GM13977 (cell line): ENCODE measurements at regions of chr12 and their contacts with region 1.

Region 1: DNA sequence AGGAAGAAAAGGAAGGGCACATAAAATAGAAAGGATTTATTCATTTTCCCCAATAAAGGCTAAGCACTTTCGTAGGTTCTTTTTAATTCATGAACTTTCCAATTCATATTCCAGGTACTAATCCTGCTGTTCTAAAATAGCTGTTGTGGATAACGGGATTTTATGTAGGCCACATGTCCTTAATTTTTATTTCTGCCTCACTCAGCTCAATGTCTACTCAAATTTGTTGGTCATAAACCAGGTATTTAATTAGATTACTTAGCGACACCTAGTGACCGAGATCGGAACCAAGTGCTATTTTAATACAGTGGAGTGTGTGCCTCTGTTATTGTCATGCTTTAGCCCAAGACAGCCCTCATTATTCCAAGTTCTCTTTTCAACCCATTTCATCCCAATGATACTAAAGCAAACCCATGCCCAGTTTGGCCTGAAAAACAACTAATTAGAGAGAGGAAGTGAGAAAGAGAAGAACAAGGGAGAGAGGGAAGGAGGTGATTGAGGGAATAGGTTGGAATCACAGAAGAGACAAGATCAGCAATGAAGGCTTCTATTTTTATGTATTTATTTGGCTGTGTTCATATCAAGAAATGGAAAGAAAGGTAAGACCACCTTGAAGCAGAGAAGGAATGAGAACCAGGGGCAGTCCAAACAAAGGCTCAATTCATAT is 45.9 kb upstream of the IFNG-AS1 start:
- DNase-seq: peak; percentile 40
- CTCF ChIP-seq: peak; percentile 73

Region 2: DNA sequence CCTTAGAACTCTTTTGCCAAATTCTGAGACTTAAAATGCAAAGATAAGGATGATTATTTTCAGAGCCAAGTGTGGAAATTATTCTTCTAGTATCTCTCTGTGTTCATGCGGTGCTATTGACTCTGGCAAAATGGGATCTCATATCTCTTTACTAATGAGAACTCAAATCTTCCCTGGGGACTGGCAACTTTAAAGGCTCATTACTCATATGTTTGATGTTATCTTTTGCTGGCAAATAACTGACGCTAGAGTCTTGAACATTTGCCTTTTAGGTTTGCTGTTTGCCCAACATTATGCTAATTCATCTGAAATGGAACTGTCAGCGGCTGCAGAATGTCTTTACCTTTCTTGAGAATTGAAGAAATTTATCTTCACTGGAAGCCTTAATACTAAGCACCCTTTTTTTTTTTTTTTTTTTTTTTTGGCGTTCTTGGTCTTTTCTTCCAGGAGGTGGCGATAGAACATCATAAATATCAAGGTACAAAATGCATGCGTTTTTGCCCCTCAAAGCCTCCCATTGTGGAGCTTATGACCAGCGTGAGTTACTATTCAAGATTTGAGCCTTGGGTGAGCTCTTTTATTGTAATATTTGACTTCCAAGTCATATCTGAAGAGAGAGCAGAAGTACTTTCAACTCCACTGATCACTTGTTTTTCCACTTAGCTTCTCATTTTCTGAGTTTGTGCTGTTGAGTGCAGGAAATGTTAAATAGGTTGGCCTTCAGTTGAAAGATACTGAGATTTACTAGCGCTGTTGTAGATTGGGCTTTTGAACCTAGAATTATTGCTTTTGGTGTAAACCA is 587.6 kb before region 1 on chr12:
- in situ Hi-C with region 1: loop called (anchors 10 kb)
- DNase-seq: peak; percentile 18
- CTCF ChIP-seq: peak; percentile 50

Region 3: DNA sequence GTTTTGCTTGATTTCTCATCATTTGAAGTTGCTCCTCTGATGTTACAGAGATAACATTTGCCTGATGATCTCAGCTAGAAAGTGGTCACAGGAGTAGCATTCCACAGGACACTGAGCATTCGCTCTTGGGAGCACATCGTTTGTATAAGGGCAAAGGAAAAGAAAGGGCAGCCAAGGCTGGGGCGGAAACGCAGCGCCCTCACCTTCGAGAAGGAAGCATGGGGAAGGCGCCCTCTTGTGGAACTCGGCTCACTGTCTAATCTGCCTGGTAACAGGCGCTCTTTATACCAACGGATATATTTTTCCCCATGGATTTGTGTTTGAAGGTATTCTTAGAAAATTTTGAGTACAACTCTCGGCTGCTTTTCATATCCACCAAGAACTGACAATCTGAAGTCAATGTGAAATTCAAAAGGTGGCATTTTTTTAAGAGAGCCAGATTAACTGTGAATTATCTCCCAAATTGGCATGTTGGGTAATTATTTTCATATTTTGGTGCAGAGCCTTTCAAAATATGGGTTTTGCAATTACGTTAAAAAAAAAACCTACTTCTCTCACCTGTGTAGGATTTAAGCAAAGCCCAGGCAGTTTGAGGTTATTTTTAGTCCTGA is 501.5 kb before region 1 on chr12:
- in situ Hi-C with region 1: loop called (anchors 10 kb)
- DNase-seq: peak; percentile 28
- CTCF ChIP-seq: peak; percentile 87

Region 4: GRCh38 chr12:67698672-67699581 is 244.4 kb before region 1 on chr12:
- in situ Hi-C with region 1: no loop called
- DNase-seq: peak; percentile 53
- CTCF ChIP-seq: no peak